Posterior cingulate gyrus (tissue), 11 donors: ENCODE measurements at regions of chr19 and their contacts with region 1.

Region 1: DNA sequence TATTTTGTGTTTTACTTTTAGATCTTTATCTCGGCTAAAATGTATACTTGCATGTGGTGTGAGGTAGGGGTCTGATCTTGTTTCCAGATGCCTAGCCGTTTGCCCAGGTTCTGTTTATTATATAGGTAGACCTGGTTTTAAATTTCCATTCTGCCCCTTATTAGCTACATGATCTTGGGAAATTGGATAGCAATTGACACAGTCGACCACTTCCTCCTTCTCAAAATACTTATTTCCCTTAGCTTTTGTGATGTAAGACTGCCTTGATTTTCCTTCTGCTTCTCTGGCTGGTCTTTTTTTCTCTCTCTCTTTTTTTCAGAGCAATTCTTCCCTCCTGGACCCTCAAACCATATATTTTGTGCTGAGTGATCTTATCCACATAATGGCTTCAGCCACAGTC is 3.0 kb upstream of the PGLYRP1 start:
- DNase-seq: no peak

Region 2: GRCh38 chr19:46107371-46107770 is 81.5 kb after region 1 on chr19:
- intact Hi-C with region 1: no loop called
- DNase-seq: peak in 2 of 10 donors; percentile 15 to 68

Region 3: DNA sequence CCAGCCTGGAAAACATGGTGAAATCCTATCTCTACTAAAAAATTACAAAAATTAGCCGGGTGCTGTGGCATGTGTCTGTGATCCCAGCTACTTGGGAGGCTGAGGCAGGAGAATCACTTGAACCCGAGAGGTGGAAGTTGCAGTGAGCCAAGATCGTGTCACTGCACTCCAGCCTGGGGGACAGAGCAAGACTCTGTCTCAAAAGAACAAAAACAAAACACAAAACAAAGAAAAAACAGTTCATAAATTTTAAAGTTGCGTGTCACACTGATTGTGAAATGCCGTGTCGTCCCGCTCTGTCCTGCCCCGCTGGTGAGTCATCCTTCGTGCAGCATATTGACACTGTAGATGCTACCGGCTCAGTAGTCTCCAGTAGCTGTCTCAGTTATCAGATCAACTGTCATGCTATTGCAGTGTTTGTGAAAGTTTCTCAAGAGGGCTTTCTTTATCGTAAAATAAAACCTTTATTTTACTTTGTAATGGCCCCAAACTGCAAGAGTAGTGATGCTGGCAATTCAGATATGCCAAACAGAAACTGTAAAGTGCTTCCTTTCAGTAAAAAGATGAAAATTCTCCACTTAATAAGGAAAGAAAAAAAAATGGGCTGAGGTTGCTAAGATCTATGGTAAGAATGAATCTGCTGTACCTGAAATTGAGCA is 167.3 kb after region 1 on chr19:
- intact Hi-C with region 1: loop called (anchors 5 kb)
- DNase-seq: no peak

Region 4: DNA sequence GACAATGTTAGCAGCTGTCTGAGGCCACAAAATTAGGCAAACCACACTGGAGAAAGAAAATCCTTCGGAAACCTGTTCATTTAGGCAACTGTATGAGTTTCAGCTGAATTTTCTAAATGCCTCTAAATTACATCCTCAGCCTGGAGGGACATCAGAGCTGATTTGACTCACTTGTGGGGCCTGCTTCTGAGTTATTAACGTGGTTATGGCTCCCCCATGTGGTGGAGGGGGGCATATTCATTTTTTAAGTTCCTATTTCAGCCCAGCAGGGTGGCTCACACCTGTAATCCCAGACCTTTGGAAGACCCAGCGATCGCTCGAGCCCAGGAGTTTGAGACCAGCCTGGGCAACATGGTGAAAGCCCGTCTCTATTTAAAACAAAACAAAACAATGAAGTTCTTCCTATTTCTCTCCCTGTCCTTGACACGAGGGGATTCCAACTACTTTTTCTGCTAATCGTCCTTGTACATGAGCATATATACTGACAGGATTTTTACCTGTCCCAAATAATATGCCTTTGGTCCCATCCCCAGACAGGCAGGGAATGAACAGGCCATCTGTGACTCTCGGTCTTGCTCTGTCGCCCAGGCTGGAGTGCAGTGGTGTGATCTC is 239.5 kb after region 1 on chr19:
- intact Hi-C with region 1: loop called (anchors 5 kb)
- DNase-seq: peak in 6 of 10 donors; percentile 31 to 89 (median 69)